ENCODE measurements at regions of chr9 and their contacts with region 1.

Region 1: GRCh38 chr9:72271613-72272478 is 93.2 kb downstream of the ZFAND5 start:
- DNase-seq: no peak

Region 2: DNA sequence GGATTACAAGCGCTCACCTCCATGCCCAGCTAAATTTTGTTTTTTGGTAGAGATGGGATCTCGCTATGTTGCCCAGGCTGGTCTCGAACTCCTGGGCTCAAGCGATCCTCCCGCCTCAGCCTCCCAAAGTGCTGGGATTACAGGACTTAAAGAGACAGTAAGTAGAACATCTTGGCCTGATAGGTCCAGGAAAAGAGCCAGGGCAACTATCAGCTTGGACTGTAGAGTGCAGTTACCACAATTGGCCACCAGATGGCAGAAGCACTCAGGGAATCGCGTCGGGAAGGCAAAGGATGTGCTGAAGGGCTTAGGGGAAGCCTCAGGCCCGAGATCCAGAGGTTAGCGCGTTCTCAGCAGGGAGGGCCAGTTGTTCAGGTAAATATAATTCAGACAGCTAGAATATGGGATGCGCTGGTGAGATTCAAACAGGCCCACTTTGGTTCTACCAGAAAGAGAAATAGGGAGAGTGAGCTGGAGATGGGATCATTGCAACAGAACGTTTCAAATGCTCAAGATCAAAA is 232.9 kb before region 1 on chr9:
- intact Hi-C with region 1: loop called (anchors 5 to 10 kb)
- DNase-seq: peak; percentile 83

Measured in posterior vena cava (tissue), 2 donors.